MCF 10A (cell line): ENCODE measurements at regions of chr7 and their contacts with region 1.

Region 1: GRCh38 chr7:23055582-23056178 is 41.8 kb upstream of the HYCC1 start:
- DNase-seq: peak; percentile 79
- H3K4me3 Mint-ChIP-seq: no peak overlapping the region
- H3K27ac Mint-ChIP-seq: no peak overlapping the region
- H3K4me1 Mint-ChIP-seq: peaks cover 6% of the 10 kb centered on the region
- H3K27me3 Mint-ChIP-seq: no peaks in the 10 kb centered on the region
- CTCF ChIP-seq: peak; percentile 92

Region 2: DNA sequence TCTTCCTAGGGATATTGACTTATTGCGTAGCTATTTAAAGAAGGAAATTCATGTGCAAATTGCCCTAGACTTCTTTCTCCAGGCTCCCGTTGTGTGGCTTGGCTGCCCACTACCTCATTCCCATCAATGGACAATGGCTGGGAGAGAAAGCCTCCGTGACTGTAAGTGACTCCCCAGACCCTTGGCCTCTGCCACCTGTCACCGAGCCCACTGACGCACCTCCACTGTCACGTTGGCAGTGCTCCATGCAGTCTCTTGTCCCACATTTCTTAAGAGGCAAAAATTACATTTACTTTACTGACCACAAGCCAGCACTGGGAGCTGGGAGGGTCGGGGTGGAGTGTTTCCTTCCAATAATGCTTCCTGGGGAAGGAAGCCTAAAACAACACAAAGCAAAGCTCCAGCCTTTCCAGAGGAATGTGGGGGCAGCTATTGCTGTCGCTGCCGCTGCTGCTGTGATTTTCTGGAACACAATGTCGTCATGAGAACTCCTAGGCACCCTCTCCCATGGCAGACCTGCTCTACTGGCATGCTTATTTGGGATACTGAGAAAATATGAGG is 466.0 kb before region 1 on chr7:
- CTCF ChIA-PET with region 1: no interaction called
- POLR2A ChIA-PET with region 1: no interaction called
- intact Hi-C with region 1: no loop called
- DNase-seq: peak; percentile 79
- H3K4me3 Mint-ChIP-seq: no peak overlapping the region
- H3K27ac Mint-ChIP-seq: no peak overlapping the region
- H3K4me1 Mint-ChIP-seq: peaks cover 51% of the 10 kb centered on the region
- H3K27me3 Mint-ChIP-seq: no peaks in the 10 kb centered on the region
- CTCF ChIP-seq: no peak

Region 3: DNA sequence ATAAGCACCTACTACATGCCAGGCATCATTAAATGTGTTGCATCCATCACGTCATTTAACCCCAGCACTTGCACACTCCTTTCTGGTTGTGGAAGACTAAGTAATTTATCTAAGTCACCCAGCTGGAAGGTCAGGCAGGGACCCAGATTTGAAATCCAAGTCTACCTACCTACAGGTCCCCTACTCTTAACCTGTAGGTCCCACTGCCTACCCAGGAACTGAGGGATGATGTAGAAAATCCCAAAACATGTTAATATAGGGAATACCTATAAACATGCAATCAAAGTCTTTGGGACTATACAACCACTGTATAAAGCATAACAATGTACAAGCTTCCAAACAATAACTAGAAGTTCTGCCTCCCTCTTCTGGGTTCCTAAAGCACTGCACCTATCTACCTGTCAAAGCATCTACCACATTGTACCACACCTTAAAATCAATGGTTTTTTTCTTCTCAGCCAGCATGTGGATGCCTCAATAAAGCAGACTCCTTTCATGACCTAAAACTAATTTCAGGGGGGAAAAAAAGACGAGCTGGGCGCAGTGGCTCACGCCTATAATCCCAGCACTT is 323.0 kb before region 1 on chr7:
- CTCF ChIA-PET with region 1: interaction called, 28 read pairs
- POLR2A ChIA-PET with region 1: interaction called, 3 read pairs
- intact Hi-C with region 1: loop called (anchors 1 kb)
- DNase-seq: peak; percentile 50
- H3K4me3 Mint-ChIP-seq: no peak overlapping the region
- H3K27ac Mint-ChIP-seq: no peak overlapping the region
- H3K4me1 Mint-ChIP-seq: peaks cover 16% of the 10 kb centered on the region
- H3K27me3 Mint-ChIP-seq: peaks cover 10% of the 10 kb centered on the region
- CTCF ChIP-seq: peak; percentile 52

Region 4: DNA sequence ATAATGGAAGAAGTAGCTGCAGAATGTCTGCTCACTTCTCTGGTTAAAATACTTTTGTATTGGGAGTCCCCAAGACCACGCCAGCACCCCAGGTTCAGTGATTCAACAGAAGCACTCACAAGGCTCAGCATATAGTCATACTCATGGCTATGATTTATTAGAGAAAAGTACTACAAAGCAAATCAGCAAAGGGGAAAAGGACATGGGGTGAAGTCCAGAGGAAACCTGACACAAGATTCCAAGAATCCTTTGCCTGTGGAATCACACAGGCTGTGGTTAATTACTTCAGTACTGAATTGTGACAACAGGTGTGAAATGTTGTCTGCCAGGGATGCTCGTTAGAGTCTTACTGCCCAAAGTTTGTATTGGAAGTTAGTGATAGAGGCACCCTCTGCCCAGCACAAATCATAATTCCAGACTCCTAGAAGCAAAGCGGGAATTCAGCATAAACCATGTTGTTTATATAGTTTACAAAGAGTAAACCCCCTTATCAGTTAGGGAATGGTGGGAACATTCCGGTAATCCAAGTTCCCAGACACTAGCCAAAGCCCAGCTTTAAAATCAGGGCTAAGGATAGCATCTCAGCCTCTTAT is 121.1 kb before region 1 on chr7:
- CTCF ChIA-PET with region 1: interaction called, 6 read pairs
- POLR2A ChIA-PET with region 1: no interaction called
- intact Hi-C with region 1: loop called (anchors 5 kb)
- DNase-seq: no peak
- H3K4me3 Mint-ChIP-seq: no peak overlapping the region
- H3K27ac Mint-ChIP-seq: no peak overlapping the region
- H3K4me1 Mint-ChIP-seq: no peaks in the 10 kb centered on the region
- H3K27me3 Mint-ChIP-seq: no peaks in the 10 kb centered on the region
- CTCF ChIP-seq: no peak

Region 5: GRCh38 chr7:23013715-23014649 is 41.7 kb before region 1 on chr7 and contains the start of gene HYCC1:
- CTCF ChIA-PET with region 1: interaction called, 24 read pairs
- POLR2A ChIA-PET with region 1: interaction called, 8 read pairs
- intact Hi-C with region 1: loop called (anchors 1 kb)
- DNase-seq: peak; percentile 99
- H3K4me3 Mint-ChIP-seq: no peak within 1 kb of the TSS
- H3K27ac Mint-ChIP-seq: no peak within 1 kb of the TSS
- H3K4me1 Mint-ChIP-seq: peaks cover 15% of the 10 kb centered on the region
- H3K27me3 Mint-ChIP-seq: no peaks in the 10 kb centered on the region
- CTCF ChIP-seq: peak; percentile 45
- total RNA-seq, gene HYCC1: 48.9 and 49.1 TPM in 2 replicates

Region 6: DNA sequence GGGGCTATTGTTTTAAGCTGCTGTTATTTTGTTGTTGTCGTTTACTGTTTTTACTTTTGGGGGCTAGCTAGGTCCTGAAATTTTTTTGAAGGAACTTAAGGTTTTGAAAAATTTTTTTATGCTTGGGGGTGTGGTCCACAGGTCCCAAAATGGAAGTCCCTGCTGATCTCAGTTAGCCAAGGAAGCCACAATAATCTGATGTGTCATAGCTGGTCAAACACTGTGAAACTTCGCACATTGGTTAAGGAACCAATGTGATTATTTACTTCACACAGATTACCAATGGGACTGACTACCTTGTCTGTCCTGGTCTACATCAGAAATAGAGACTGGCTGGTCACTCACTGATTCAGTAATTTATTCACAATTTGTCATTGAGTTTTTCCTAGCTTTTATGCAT is 12.2 kb before region 1 on chr7:
- CTCF ChIA-PET with region 1: interaction called, 31 read pairs
- POLR2A ChIA-PET with region 1: interaction called, 4 read pairs
- intact Hi-C with region 1: no loop called
- DNase-seq: no peak
- H3K4me3 Mint-ChIP-seq: no peak overlapping the region
- H3K27ac Mint-ChIP-seq: no peak overlapping the region
- H3K4me1 Mint-ChIP-seq: no peaks in the 10 kb centered on the region
- H3K27me3 Mint-ChIP-seq: no peaks in the 10 kb centered on the region
- CTCF ChIP-seq: no peak